H1 (cell line): ENCODE measurements at regions of chr11 and their contacts with region 1.

Region 1: GRCh38 chr11:8744423-8744822 is 61.8 kb downstream of the RPL27A start:
- DNase-seq: no peak
- H3K4me3 ChIP-seq: no peak overlapping the region
- H3K27ac ChIP-seq: no peak overlapping the region
- H3K4me1 ChIP-seq: peaks cover 0 to 7% (median 1%) of the 10 kb centered on the region in 4 experiments; a peak in 2 of 7 replicates
- H3K27me3 ChIP-seq: no peaks in the 10 kb centered on the region
- CTCF ChIP-seq: no peak
- EP300 ChIP-seq: no peak
- POLR2A ChIP-seq: no peak
- RAD21 ChIP-seq: no peak

Region 2: GRCh38 chr11:8192016-8192895 is 552.2 kb before region 1 on chr11:
- CTCF ChIA-PET with region 1: no interaction called
- POLR2A ChIA-PET with region 1: no interaction called
- DNase-seq: peak in 1 of 2 experiments; percentile 88
- H3K4me3 ChIP-seq: no peak overlapping the region
- H3K27ac ChIP-seq: no peak overlapping the region
- H3K4me1 ChIP-seq: peaks cover 0 to 3% (median 0%) of the 10 kb centered on the region in 4 experiments; a peak in 2 of 7 replicates
- H3K27me3 ChIP-seq: peaks cover 0 to 10% (median under 1%) of the 10 kb centered on the region in 4 experiments; a peak in 1 of 7 replicates
- CTCF ChIP-seq: peak; percentile 83 to 98 (median 89)
- EP300 ChIP-seq: no peak
- POLR2A ChIP-seq: no peak
- RAD21 ChIP-seq: peak; percentile 89

Region 3: DNA sequence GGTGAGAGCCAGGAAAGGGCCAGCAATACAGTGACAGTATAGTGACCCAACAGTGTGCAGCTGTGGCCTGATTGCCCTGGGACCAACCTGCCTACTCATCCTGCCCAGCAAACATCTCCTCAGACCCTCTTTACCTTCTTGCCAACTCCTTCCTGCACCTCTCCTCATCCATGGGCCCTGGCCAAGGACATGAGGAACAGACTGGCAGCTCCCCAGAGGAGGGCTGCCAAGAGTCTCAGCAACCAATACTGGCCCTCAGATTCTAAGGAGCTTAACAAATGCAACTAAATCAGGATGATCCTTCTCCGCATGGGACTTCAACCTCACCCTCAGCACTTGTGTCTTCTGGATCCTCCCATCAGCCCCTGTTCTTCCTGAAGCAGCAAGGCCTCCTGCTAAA is 15.2 kb after region 1 on chr11:
- CTCF ChIA-PET with region 1: interaction called, 22 read pairs
- POLR2A ChIA-PET with region 1: interaction called, 4 read pairs
- DNase-seq: no peak
- H3K4me3 ChIP-seq: no peak overlapping the region
- H3K27ac ChIP-seq: no peak overlapping the region
- H3K4me1 ChIP-seq: peaks cover 0 to 10% (median 0%) of the 10 kb centered on the region in 4 experiments; a peak in 1 of 7 replicates
- H3K27me3 ChIP-seq: no peaks in the 10 kb centered on the region
- CTCF ChIP-seq: no peak
- EP300 ChIP-seq: no peak
- POLR2A ChIP-seq: no peak
- RAD21 ChIP-seq: no peak